HepG2 (cell line): ENCODE measurements at regions of chr16 and their contacts with region 1.

Region 1: DNA sequence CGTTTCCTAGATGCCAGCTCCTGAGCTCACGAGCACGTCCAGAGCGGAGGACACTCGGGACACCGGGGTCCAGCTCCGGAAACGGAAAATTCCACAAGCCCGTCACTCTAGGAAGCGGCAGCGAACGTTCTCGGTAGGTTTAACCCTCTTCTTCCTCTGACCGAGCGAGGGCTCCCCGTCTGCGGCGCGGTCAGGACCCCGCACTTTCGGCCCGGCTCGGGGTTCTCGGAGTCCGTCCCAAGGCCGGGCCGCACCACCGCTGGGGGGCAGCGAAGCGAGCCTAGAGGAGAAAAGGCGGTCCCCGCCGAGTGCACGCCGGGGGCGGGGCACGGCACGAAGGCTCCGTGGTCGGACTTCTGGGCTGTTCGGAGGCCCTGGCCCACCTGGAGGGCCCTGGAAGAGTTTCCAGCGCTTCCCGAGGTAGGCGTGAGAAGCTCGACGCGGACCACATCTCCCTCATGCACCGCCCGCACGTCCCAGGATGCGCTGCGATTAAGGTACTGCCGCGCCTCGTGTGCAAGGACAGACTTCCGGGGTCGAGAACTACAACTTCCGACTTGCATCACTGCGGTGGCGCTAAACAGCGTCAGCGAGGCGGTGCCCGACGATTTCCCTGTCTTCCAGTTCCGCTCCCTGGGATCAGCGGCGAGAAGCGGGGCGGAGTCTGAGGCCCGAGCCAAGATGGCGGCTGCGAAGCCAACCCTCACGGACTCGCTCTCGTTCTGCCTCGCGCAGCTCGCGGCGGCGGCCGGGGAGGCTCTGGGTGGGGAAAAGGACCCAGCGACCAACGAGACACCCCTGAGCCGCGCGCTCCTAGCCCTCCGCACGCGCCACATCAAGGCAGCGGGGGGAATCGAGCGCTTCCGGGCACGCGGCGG is at the start of gene ARMC5:
- DNase-seq: peak; percentile 98
- ATAC-seq: peak; percentile 76
- H3K4me3 ChIP-seq: peak within 1 kb of the TSS; percentile 71 to 98 (median 83)
- H3K27ac ChIP-seq: peak within 1 kb of the TSS; percentile 95
- H3K4me1 ChIP-seq: peaks cover 48% of the 10 kb centered on the region
- H3K27me3 ChIP-seq: no peaks in the 10 kb centered on the region; a peak in 1 of 5 replicates
- CTCF ChIP-seq: peak; percentile 90
- EP300 ChIP-seq: no peak; a peak in 1 of 4 replicates
- POLR2A ChIP-seq: peak; percentile 87 to 97
- RAD21 ChIP-seq: peak; percentile 63
- total RNA-seq, gene ARMC5: 13.0 and 22.3 TPM in 2 replicates

Region 2: GRCh38 chr16:30761928-30762810 is 696.9 kb before region 1 on chr16 and contains the starts of genes CFAP119 and RNF40:
- CTCF ChIA-PET with region 1: no interaction called
- POLR2A ChIA-PET with region 1: no interaction called
- in situ Hi-C with region 1: no loop called
- intact Hi-C with region 1: no loop called
- DNase-seq: peak; percentile 99
- ATAC-seq: peak; percentile 93
- H3K4me3 ChIP-seq: peak within 1 kb of the TSS; percentile 80 to 91 (median 86)
- H3K27ac ChIP-seq: peak within 1 kb of the TSS; percentile 66
- H3K4me1 ChIP-seq: peaks cover 29% of the 10 kb centered on the region
- H3K27me3 ChIP-seq: no peaks in the 10 kb centered on the region; a peak in 1 of 5 replicates
- CTCF ChIP-seq: no peak
- EP300 ChIP-seq: no peak; a peak in 1 of 4 replicates
- POLR2A ChIP-seq: peak; percentile 76 to 88
- RAD21 ChIP-seq: peak; percentile 24; the same call in 1 of the 2 replicates
- total RNA-seq, gene CFAP119: 1.2 and 6.4 TPM in 2 replicates
- total RNA-seq, gene RNF40: 85.6 and 102 TPM in 2 replicates

Region 3: GRCh38 chr16:31073968-31074813 is 384.9 kb before region 1 on chr16 and contains the starts of genes ZNF646 and ZNF668:
- CTCF ChIA-PET with region 1: no interaction called
- POLR2A ChIA-PET with region 1: interaction called, 18 read pairs
- in situ Hi-C with region 1: no loop called
- intact Hi-C with region 1: no loop called
- DNase-seq: peak; percentile 99
- ATAC-seq: peak; percentile 86
- H3K4me3 ChIP-seq: peak within 1 kb of the TSS; percentile 75 to 97 (median 90)
- H3K27ac ChIP-seq: peak within 1 kb of the TSS; percentile 83
- H3K4me1 ChIP-seq: peaks cover 22% of the 10 kb centered on the region
- H3K27me3 ChIP-seq: no peaks in the 10 kb centered on the region; a peak in 1 of 5 replicates
- CTCF ChIP-seq: no peak; the same call in 1 of the 2 replicates
- EP300 ChIP-seq: peak in 1 of 2 experiments; percentile 34; a peak in 1 of 4 replicates
- POLR2A ChIP-seq: peak; percentile 84 to 90
- RAD21 ChIP-seq: peak; percentile 71
- total RNA-seq, gene ZNF646: 7.8 and 10.9 TPM in 2 replicates
- total RNA-seq, gene ZNF668: 7.5 and 9.8 TPM in 2 replicates

Region 4: DNA sequence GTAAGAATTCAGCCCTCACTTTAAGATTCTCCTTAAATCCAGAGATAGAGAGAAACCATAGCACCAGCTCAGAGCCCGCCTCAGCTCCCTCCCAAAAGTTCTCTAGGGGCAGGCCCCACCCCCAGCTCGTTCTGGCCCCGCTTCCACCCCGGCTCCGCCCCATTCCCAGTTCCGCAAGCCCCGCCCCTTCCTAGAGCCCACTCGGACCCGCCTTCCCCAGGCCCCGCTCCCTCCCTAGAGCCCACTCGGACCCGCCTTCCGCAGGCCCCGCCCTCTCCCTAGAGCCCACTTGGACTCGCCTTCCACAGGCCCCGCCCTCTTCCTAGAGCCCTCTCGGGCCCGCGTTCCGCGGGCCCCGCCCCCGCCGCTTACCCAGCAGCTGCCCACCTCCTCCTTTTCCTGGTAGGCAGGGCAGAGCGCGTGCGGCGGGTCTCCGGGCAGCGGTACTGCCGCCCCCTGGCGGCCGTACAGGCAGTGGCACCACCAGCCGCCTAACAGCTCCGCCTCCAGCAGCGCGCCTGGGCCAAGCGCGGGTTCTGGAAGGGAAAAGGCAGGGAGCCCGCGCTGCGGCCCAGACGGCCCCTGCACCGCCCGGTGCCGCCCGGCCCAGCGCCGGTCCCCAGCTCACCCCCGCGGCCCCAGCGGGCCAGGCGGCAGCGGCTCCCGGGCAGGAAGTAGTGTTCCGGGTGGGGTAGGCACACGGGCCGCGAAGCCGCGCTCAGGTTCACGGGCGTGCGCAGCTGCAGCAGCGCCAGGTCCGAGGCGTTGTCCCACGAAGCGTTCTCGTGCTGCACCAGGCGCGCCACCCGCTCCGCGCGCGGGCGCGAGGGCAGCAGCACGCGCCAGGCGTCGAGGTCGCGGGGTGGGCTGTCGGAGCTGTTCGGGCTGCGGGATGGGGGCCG is 316.7 kb before region 1 on chr16:
- CTCF ChIA-PET with region 1: no interaction called
- POLR2A ChIA-PET with region 1: interaction called, 11 read pairs
- in situ Hi-C with region 1: no loop called
- intact Hi-C with region 1: no loop called
- DNase-seq: peak; percentile 98
- ATAC-seq: peak; percentile 74
- H3K4me3 ChIP-seq: peak overlapping the region; percentile 39 to 77 (median 64)
- H3K27ac ChIP-seq: peak overlapping the region; percentile 80
- H3K4me1 ChIP-seq: peaks cover 65% of the 10 kb centered on the region
- H3K27me3 ChIP-seq: peaks cover 0 to 14% of the 10 kb centered on the region in 2 experiments; a peak in 3 of 5 replicates
- CTCF ChIP-seq: peak; percentile 98
- EP300 ChIP-seq: peak; percentile 26 to 27; a peak in 1 of 4 replicates
- POLR2A ChIP-seq: no peak
- RAD21 ChIP-seq: peak; percentile 99

Region 5: DNA sequence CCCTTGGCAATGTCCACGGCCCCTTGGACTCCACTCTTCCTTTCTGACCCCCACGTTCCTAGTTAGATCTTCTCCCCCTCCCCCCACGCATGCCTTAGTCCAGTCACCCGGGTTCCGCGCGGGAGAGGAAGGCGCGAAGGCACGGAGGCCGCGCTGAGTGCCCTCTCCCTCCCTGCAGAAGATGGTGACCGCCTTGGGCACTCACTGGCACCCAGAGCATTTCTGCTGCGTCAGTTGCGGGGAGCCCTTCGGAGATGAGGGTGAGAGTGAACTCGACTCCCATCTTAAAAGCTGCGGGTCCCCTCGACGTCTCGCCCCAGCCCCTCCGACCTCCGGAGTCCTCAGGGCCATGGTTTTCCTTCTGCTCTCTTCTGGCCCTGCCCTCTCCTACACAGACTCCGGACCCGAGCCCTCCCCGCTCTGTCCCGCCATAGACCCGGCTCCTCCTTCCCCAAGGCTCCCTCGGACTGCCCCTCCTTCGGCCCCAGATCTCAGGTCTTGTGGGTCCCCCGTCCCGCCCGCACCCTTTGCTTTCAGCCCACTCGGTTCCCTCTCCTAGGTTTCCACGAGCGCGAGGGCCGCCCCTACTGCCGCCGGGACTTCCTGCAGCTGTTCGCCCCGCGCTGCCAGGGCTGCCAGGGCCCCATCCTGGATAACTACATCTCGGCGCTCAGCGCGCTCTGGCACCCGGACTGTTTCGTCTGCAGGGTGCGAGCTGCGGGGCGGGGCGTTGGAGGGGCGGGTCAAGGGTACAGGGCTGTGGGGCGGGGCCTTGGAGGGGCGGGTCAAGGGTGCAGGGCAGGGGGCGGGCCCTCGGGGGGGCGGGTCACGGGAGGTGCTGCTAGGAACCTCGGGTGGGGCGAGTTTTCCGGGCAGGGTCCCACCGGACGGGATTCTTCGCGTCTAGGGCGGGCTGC is 17.5 kb after region 1 on chr16:
- CTCF ChIA-PET with region 1: interaction called, 3 read pairs
- POLR2A ChIA-PET with region 1: interaction called, 110 read pairs
- in situ Hi-C with region 1: no loop called
- intact Hi-C with region 1: loop called (anchors 1 kb)
- DNase-seq: peak; percentile 63
- ATAC-seq: peak; percentile 63
- H3K4me3 ChIP-seq: peak overlapping the region; percentile 71 to 94 (median 92)
- H3K27ac ChIP-seq: peak overlapping the region; percentile 80
- H3K4me1 ChIP-seq: peaks cover 77% of the 10 kb centered on the region
- H3K27me3 ChIP-seq: peaks cover 0 to 16% of the 10 kb centered on the region in 2 experiments; a peak in 3 of 5 replicates
- CTCF ChIP-seq: no peak
- EP300 ChIP-seq: no peak
- POLR2A ChIP-seq: peak; percentile 8 to 72; a peak in 2 of 4 replicates
- RAD21 ChIP-seq: no peak

Region 6: GRCh38 chr16:31700526-31701388 is 241.7 kb after region 1 on chr16:
- CTCF ChIA-PET with region 1: no interaction called
- POLR2A ChIA-PET with region 1: interaction called, 14 read pairs
- in situ Hi-C with region 1: loop called (anchors 5 kb)
- intact Hi-C with region 1: loop called (anchors 1 kb)
- DNase-seq: peak; percentile 90
- ATAC-seq: peak; percentile 90
- H3K4me3 ChIP-seq: peak overlapping the region; percentile 75 to 97 (median 86)
- H3K27ac ChIP-seq: peak overlapping the region; percentile 91
- H3K4me1 ChIP-seq: peaks cover 49% of the 10 kb centered on the region
- H3K27me3 ChIP-seq: no peaks in the 10 kb centered on the region; a peak in 1 of 5 replicates
- CTCF ChIP-seq: peak; percentile 55
- EP300 ChIP-seq: peak; percentile 55 to 76; a peak in 3 of 4 replicates
- POLR2A ChIP-seq: peak; percentile 92 to 95
- RAD21 ChIP-seq: no peak; the same call in 1 of the 2 replicates

Region 7: DNA sequence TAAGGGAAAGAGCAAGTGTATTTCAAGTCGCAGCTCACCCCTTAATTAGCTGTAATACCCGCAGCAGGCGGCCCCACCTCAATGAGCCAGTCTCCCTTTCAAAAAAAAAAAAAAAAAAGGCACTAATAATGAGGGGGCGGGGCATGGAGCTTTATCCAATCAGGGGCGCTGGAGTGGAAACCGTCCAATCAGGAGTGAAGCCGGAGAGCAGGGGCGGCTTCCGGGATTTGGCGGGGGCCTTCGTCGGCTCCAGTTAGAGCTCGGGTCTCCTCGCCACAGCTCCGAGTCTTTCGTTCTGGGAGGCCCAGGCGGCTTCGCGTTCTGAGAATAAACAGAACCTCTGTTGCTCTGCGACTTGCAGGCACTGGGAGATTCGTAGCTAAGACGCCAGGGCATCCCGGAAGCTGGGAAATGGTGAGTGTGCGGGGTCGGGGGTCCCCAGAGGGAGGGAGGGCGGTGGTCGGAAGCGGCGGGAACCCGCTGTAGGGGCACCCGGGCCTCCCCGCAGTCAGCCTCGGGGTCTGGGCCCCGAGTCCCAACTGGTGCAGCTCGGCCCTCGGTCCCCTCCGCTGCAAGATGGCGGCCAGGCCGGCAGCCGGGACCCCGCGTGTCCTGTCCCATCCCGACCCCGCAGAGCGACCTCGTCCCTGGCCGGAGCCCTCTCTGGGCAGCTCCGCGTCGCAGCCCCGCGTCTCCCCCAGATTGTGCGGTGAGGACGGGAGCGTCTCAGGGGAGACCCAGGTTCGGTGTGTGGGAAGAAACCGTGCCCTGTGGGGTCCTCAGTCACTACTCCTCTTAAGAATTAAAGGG is 414.7 kb after region 1 on chr16 and contains the start of gene ZNF267:
- CTCF ChIA-PET with region 1: no interaction called
- POLR2A ChIA-PET with region 1: interaction called, 17 read pairs
- in situ Hi-C with region 1: loop called (anchors 10 kb)
- intact Hi-C with region 1: loop called (anchors 5 kb)
- DNase-seq: peak; percentile 94
- ATAC-seq: peak; percentile 90
- H3K4me3 ChIP-seq: peak within 1 kb of the TSS; percentile 89 to 99 (median 95)
- H3K27ac ChIP-seq: peak within 1 kb of the TSS; percentile 89
- H3K4me1 ChIP-seq: peaks cover 59% of the 10 kb centered on the region
- H3K27me3 ChIP-seq: peaks cover 0 to 13% of the 10 kb centered on the region in 2 experiments; a peak in 2 of 5 replicates
- CTCF ChIP-seq: no peak
- EP300 ChIP-seq: 0 out of 4 replicates have a peak, but pooled peaks of 1 of the 2 experiments have one; percentile 9
- POLR2A ChIP-seq: peak; percentile 86 to 92
- RAD21 ChIP-seq: peak; percentile 12; the same call in 1 of the 2 replicates
- total RNA-seq, gene ZNF267: 30.0 and 42.4 TPM in 2 replicates